ENCODE measurements at regions of chr12 and their contacts with region 1.

Region 1: GRCh38 chr12:90393089-90393488 is 561.9 kb downstream of the CCER1 start:
- DNase-seq: no peak
- H3K4me3 ChIP-seq: no peak overlapping the region
- H3K27ac ChIP-seq: no peak overlapping the region
- H3K4me1 ChIP-seq: no peaks in the 10 kb centered on the region
- CTCF ChIP-seq: no peak

Region 2: GRCh38 chr12:90407841-90408240 is 14.8 kb after region 1 on chr12:
- CTCF ChIA-PET with region 1: no interaction called
- POLR2A ChIA-PET with region 1: interaction called, 11 read pairs
- intact Hi-C with region 1: no loop called
- DNase-seq: no peak
- H3K4me3 ChIP-seq: no peak overlapping the region
- H3K27ac ChIP-seq: no peak overlapping the region
- H3K4me1 ChIP-seq: no peaks in the 10 kb centered on the region
- CTCF ChIP-seq: peak; percentile 28

Region 3: GRCh38 chr12:90484094-90484493 is 91.0 kb after region 1 on chr12:
- CTCF ChIA-PET with region 1: no interaction called
- POLR2A ChIA-PET with region 1: no interaction called
- intact Hi-C with region 1: no loop called
- DNase-seq: no peak
- H3K4me3 ChIP-seq: no peak overlapping the region
- H3K27ac ChIP-seq: no peak overlapping the region
- H3K4me1 ChIP-seq: no peaks in the 10 kb centered on the region
- CTCF ChIP-seq: no peak

Region 4: GRCh38 chr12:90499795-90500194 is 106.7 kb after region 1 on chr12:
- CTCF ChIA-PET with region 1: no interaction called
- POLR2A ChIA-PET with region 1: no interaction called
- intact Hi-C with region 1: no loop called
- DNase-seq: no peak
- H3K4me3 ChIP-seq: no peak overlapping the region
- H3K27ac ChIP-seq: no peak overlapping the region
- H3K4me1 ChIP-seq: no peaks in the 10 kb centered on the region
- CTCF ChIP-seq: no peak

Measured in OCI-LY7 (cell line).